CD8-positive, alpha-beta memory T cell (primary cell): ENCODE measurements at regions of chr3 and their contacts with region 1.

Region 1: GRCh38 chr3:50192689-50193141 is 1.3 kb downstream of the GNAT1 start:
- DNase-seq: peak; percentile 70 to 86 (median 77)
- H3K4me3 ChIP-seq: no peak overlapping the region
- H3K4me3 Mint-ChIP-seq: peak overlapping the region in 4 of 7 donors; percentile 38 to 78 (median 46)
- H3K27ac ChIP-seq: no peak overlapping the region
- H3K27ac Mint-ChIP-seq: peak overlapping the region in 3 of 8 donors; percentile 17 to 83 (median 29)
- H3K4me1 ChIP-seq: peaks cover 21% of the 10 kb centered on the region
- H3K4me1 Mint-ChIP-seq: peaks cover 4 to 22% (median 7%) of the 10 kb centered on the region in 3 donors
- H3K27me3 ChIP-seq: peaks cover 23% of the 10 kb centered on the region
- H3K27me3 Mint-ChIP-seq: peaks cover 7 to 13% of the 10 kb centered on the region in 2 donors

Region 2: DNA sequence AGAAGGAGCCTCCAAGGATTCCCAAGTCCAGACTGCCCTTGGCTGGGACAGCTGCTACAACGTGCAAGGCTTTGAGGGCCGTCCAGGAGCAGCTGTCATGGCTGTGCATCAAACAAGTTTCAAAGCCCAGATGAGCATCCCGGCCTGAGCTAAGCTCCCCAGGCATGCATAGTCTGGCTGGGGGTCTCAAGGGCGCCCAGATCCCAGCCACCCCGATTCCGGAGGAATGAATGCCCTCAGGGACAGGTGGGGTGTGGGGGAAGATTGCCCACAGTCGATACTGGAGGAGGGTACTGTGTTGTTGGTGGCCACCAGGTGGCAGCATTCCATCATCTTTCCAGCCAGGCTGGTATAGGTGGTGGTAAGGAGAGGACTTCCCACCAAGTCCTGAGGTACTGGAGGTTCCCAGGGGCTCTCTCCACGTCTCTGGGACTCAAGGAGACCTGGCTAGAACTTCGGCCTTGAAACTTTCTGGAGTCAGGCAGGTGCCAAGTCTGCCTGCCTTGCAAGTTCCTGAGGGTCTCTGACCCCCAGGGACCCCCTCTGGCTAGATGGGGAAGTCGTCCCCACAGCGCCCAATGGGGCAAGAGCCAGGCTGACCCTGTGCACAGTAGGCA is 71.2 kb before region 1 on chr3:
- CTCF ChIA-PET with region 1: interaction called, 16 read pairs
- POLR2A ChIA-PET with region 1: no interaction called
- DNase-seq: peak; percentile 51 to 78 (median 57)
- H3K4me3 ChIP-seq: no peak overlapping the region
- H3K4me3 Mint-ChIP-seq: no peak overlapping the region
- H3K27ac ChIP-seq: no peak overlapping the region
- H3K27ac Mint-ChIP-seq: peak overlapping the region in 2 of 8 donors; percentile 45 to 64
- H3K4me1 ChIP-seq: no peaks in the 10 kb centered on the region
- H3K4me1 Mint-ChIP-seq: peaks cover 0 to 1% (median 0%) of the 10 kb centered on the region in 3 donors
- H3K27me3 ChIP-seq: no peaks in the 10 kb centered on the region
- H3K27me3 Mint-ChIP-seq: no peaks in the 10 kb centered on the region

Region 3: GRCh38 chr3:50136714-50137405 is 55.9 kb before region 1 on chr3:
- CTCF ChIA-PET with region 1: no interaction called
- POLR2A ChIA-PET with region 1: no interaction called
- DNase-seq: no peak
- H3K4me3 ChIP-seq: no peak overlapping the region
- H3K4me3 Mint-ChIP-seq: no peak overlapping the region
- H3K27ac ChIP-seq: no peak overlapping the region
- H3K27ac Mint-ChIP-seq: no peak overlapping the region
- H3K4me1 ChIP-seq: peaks cover 7% of the 10 kb centered on the region
- H3K4me1 Mint-ChIP-seq: peaks cover 2 to 9% (median 8%) of the 10 kb centered on the region in 3 donors
- H3K27me3 ChIP-seq: no peaks in the 10 kb centered on the region
- H3K27me3 Mint-ChIP-seq: peaks cover 0 to 2% of the 10 kb centered on the region in 2 donors

Region 4: GRCh38 chr3:50211930-50212329 is 19.2 kb after region 1 on chr3:
- CTCF ChIA-PET with region 1: interaction called, 37 read pairs
- POLR2A ChIA-PET with region 1: no interaction called
- DNase-seq: no peak
- H3K4me3 ChIP-seq: no peak overlapping the region
- H3K4me3 Mint-ChIP-seq: no peak overlapping the region
- H3K27ac ChIP-seq: no peak overlapping the region
- H3K27ac Mint-ChIP-seq: no peak overlapping the region
- H3K4me1 ChIP-seq: no peaks in the 10 kb centered on the region
- H3K4me1 Mint-ChIP-seq: no peaks in the 10 kb centered on the region
- H3K27me3 ChIP-seq: no peaks in the 10 kb centered on the region
- H3K27me3 Mint-ChIP-seq: peaks cover under 1 to 5% of the 10 kb centered on the region in 2 donors

Region 5: GRCh38 chr3:50235716-50236496 is 43.2 kb after region 1 on chr3 and contains the start of gene GNAI2:
- CTCF ChIA-PET with region 1: interaction called, 266 read pairs
- POLR2A ChIA-PET with region 1: no interaction called
- DNase-seq: peak; percentile 98 to 99 (median 99)
- H3K4me3 ChIP-seq: peak within 1 kb of the TSS; percentile 99
- H3K4me3 Mint-ChIP-seq: peak within 1 kb of the TSS; percentile 87 to 99 (median 98)
- H3K27ac ChIP-seq: peak within 1 kb of the TSS; percentile 71
- H3K27ac Mint-ChIP-seq: peak within 1 kb of the TSS; percentile 93 to 99 (median 96)
- H3K4me1 ChIP-seq: peaks cover 37% of the 10 kb centered on the region
- H3K4me1 Mint-ChIP-seq: peaks cover 28 to 35% (median 33%) of the 10 kb centered on the region in 3 donors
- H3K27me3 ChIP-seq: no peaks in the 10 kb centered on the region
- H3K27me3 Mint-ChIP-seq: no peaks in the 10 kb centered on the region
- total RNA-seq, gene GNAI2: 259 to 265 TPM

Region 6: DNA sequence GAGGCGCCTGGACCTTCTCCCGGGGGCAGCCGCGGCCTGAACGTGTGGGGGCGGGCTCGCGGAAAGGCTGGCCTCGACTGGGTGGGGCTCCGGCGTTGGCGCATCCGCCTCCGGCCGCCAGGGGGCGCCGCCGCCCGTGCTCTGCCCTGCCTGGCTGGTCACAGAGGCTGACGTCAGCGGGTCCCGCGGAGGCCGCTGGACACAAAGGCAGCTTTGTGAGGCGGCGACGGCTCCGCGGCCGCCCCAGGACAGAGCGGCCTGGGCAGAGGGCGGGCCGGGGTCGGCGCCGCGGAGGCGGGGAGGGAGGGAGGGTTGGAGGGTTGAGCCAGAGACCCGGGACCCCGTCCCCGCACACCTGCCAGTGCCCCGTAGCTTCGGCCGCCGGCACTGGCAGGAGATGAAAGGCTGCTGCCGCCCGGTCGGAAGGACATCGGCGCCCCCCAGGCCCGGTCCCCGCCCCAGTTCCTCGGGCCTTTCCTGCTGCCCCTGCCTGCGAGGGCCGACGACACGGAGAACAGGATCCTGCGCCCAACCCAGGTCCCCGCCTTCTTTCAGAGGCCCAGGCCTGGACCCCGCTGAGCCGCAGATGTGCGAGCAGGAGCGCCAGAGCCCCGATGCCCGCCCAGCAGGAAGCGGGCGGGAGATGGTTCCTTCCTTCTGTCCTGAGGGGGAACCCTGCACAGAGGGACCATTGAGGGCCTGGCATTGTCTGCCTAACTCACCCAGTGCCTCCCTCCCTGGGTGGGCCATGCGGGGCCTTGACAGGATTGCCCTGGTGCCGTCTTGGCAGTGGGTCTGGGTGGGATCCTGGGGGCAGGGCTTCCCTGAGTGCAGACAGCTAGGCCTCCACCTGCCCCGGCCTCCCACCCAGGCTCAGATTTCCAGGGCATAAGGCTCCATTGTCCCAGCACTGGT is 67.6 kb after region 1 on chr3:
- CTCF ChIA-PET with region 1: interaction called, 27 read pairs
- POLR2A ChIA-PET with region 1: no interaction called
- DNase-seq: peak; percentile 77 to 88 (median 80)
- H3K4me3 ChIP-seq: peak overlapping the region; percentile 22
- H3K4me3 Mint-ChIP-seq: peak overlapping the region in 6 of 7 donors; percentile 50 to 86 (median 70)
- H3K27ac ChIP-seq: peak overlapping the region; percentile 47
- H3K27ac Mint-ChIP-seq: peak overlapping the region in 7 of 8 donors; percentile 3 to 98 (median 59)
- H3K4me1 ChIP-seq: peaks cover 5% of the 10 kb centered on the region
- H3K4me1 Mint-ChIP-seq: peaks cover 0 to 13% (median 8%) of the 10 kb centered on the region in 3 donors
- H3K27me3 ChIP-seq: no peaks in the 10 kb centered on the region
- H3K27me3 Mint-ChIP-seq: no peaks in the 10 kb centered on the region

Region 7: GRCh38 chr3:50272911-50273693 is 80.4 kb after region 1 on chr3:
- CTCF ChIA-PET with region 1: interaction called, 86 read pairs
- POLR2A ChIA-PET with region 1: no interaction called
- DNase-seq: peak; percentile 73 to 87 (median 83)
- H3K4me3 ChIP-seq: peak overlapping the region; percentile 51
- H3K4me3 Mint-ChIP-seq: peak overlapping the region in 6 of 7 donors; percentile 45 to 77 (median 72)
- H3K27ac ChIP-seq: no peak overlapping the region
- H3K27ac Mint-ChIP-seq: peak overlapping the region in 7 of 8 donors; percentile 10 to 85 (median 63)
- H3K4me1 ChIP-seq: peaks cover 28% of the 10 kb centered on the region
- H3K4me1 Mint-ChIP-seq: peaks cover 23 to 32% (median 24%) of the 10 kb centered on the region in 3 donors
- H3K27me3 ChIP-seq: peaks cover 28% of the 10 kb centered on the region
- H3K27me3 Mint-ChIP-seq: peaks cover 27 to 35% of the 10 kb centered on the region in 2 donors